GM12878 (cell line): ENCODE measurements at regions of chr3 and their contacts with region 1.

Region 1: GRCh38 chr3:107574650-107575049 is 51.9 kb downstream of the BBX start:
- DNase-seq: no peak
- ATAC-seq: peak; percentile 89
- H3K4me3 ChIP-seq: no peak overlapping the region
- H3K27ac ChIP-seq: no peak overlapping the region
- H3K4me1 ChIP-seq: no peaks in the 10 kb centered on the region
- H3K27me3 ChIP-seq: no peaks in the 10 kb centered on the region
- CTCF ChIP-seq: peak; percentile 45 to 70 (median 47); a peak in 5 of 6 replicates
- EP300 ChIP-seq: no peak
- POLR2A ChIP-seq: no peak
- RAD21 ChIP-seq: peak; percentile 85

Region 2: DNA sequence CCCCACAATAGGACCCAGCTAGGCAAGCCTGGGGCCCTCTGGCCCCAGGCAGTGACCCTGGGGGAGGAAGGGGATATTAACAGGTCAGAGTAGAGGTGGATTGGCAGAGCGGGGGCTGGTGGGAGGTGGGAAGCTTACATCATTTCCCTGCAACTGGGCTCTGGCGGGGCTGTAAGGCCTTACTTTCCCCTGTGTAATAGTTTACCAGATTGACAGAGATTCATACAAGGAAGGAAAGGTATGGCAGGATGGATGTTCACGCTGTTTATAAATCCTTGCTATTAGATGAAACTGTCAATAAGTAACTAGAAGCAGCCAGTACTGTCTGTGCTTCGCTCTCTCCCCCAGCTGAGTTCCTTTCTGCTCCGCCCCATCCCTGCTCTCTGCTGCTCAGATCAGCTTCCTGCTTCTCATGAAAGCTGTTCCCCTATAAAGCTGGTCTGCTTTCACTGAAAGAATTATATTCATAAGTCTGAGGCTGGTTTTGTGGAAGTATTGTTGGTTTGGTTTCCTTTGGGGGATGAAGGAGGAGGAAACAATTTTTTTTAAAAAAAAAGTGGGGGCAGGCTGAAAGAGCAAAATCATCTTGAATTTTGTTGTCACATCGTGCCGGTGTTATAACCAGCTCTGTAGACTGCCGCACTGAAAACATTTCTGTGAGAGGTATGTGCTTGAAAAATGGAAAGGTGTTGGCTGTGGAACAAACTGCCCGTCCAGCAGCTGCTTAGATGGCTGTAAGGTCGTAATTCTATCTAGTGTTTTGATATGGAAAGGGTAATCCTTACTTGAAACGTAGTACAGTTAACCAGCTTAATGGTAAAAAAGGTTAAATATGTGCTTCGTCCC is 24.5 kb after region 1 on chr3:
- CTCF ChIA-PET with region 1: interaction called, 38 read pairs
- POLR2A ChIA-PET with region 1: interaction called, 3 read pairs
- RAD21 ChIA-PET with region 1: interaction called, 19 read pairs
- SMC1A ChIA-PET with region 1: interaction called, 48 read pairs
- in situ Hi-C with region 1: no loop called
- intact Hi-C with region 1: no loop called
- DNase-seq: peak; percentile 59
- ATAC-seq: peak; percentile 92
- H3K4me3 ChIP-seq: peak overlapping the region; percentile 71
- H3K27ac ChIP-seq: peak overlapping the region; percentile 82
- H3K4me1 ChIP-seq: peaks cover 13% of the 10 kb centered on the region
- H3K27me3 ChIP-seq: no peaks in the 10 kb centered on the region
- CTCF ChIP-seq: no peak
- EP300 ChIP-seq: no peak
- POLR2A ChIP-seq: peak; percentile 58; the same call in 1 of the 2 replicates
- RAD21 ChIP-seq: no peak

Region 3: DNA sequence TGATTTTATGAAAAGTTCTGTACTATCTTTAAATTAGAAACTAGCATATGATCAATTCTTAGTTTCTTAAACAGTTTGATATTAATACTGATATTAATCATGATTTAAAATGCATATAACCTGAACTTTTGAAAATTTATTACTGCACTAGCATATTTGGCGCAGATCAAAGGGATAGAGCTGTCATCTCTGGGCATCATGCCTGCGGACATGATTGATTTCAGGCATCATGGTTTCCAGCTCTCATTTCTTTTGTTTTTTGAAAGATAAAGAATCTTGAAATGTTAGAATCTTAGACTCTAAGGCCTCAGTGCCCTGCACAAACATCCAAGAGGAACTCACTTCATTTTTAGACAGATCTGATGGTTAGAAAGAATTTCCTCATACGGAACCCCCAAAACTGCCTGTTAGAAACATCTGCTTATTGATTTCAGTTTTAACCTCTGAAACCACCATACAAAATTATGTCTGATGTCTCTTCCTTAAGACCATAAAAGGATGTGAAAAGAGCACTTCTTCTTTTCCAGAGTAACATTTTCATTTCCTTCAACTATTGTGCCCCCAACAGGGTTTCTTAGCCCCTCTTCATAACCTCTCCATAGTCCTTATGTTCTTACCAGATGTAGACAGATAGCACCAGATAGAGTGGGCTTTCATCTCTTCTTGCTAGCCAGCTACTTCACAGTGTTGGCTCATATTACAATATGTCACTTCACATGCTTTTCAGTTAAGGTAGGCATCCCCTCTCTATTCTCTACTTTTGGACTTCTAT is 58.9 kb after region 1 on chr3:
- CTCF ChIA-PET with region 1: interaction called, 15 read pairs
- POLR2A ChIA-PET with region 1: no interaction called
- RAD21 ChIA-PET with region 1: interaction called, 7 read pairs
- SMC1A ChIA-PET with region 1: interaction called, 19 read pairs
- in situ Hi-C with region 1: no loop called
- intact Hi-C with region 1: no loop called
- DNase-seq: peak; percentile 56
- ATAC-seq: peak; percentile 94
- H3K4me3 ChIP-seq: peak overlapping the region; percentile 40; the same call in 1 of the 2 replicates
- H3K27ac ChIP-seq: peak overlapping the region; percentile 63
- H3K4me1 ChIP-seq: peaks cover 20% of the 10 kb centered on the region
- H3K27me3 ChIP-seq: no peaks in the 10 kb centered on the region
- CTCF ChIP-seq: no peak
- EP300 ChIP-seq: peak; percentile 63 to 77
- POLR2A ChIP-seq: no peak
- RAD21 ChIP-seq: no peak

Region 4: DNA sequence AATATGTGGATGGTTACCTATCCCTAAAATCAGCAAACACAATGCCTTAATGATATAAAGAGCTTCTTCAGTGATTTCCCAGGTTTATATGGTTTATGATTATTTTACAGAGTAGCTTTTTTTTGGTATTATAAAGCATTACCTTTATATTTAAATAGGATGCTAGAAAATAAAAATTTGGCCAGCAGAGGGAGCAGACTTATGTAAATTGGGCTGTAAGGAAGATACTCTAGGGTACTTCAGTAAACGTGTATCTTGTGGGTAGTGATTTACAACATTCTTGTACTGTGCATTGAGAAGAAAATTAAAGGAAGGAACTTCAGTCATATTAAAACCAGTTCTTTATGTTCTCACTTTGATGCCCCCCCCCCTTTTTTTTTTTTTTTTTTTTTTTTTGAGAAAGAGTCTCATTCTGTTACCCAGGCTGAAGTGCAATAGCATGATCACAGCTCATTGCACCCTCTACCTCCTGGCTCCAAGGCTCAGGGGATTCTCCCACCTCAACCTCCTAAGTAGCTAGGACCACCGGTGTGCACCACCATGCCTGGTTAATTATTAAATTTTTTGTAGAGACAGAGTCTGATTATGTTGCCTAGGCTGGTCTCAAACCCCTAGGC is 116.0 kb after region 1 on chr3:
- CTCF ChIA-PET with region 1: interaction called, 10 read pairs
- POLR2A ChIA-PET with region 1: no interaction called
- RAD21 ChIA-PET with region 1: no interaction called
- SMC1A ChIA-PET with region 1: interaction called, 4 read pairs
- in situ Hi-C with region 1: no loop called
- intact Hi-C with region 1: no loop called
- DNase-seq: no peak
- ATAC-seq: peak; percentile 90
- H3K4me3 ChIP-seq: no peak overlapping the region
- H3K27ac ChIP-seq: no peak overlapping the region
- H3K4me1 ChIP-seq: no peaks in the 10 kb centered on the region
- H3K27me3 ChIP-seq: no peaks in the 10 kb centered on the region
- CTCF ChIP-seq: peak; percentile 32 to 50 (median 39); a peak in 4 of 6 replicates
- EP300 ChIP-seq: no peak
- POLR2A ChIP-seq: no peak
- RAD21 ChIP-seq: peak; percentile 33; the same call in 1 of the 2 replicates

Region 5: GRCh38 chr3:107846279-107846852 is 271.7 kb after region 1 on chr3:
- CTCF ChIA-PET with region 1: interaction called, 9 read pairs
- POLR2A ChIA-PET with region 1: no interaction called
- RAD21 ChIA-PET with region 1: interaction called, 6 read pairs
- SMC1A ChIA-PET with region 1: interaction called, 5 read pairs
- in situ Hi-C with region 1: no loop called
- intact Hi-C with region 1: loop called (anchors 10 kb)
- DNase-seq: no peak
- ATAC-seq: peak; percentile 64
- H3K4me3 ChIP-seq: no peak overlapping the region
- H3K27ac ChIP-seq: no peak overlapping the region
- H3K4me1 ChIP-seq: no peaks in the 10 kb centered on the region; the same call in 1 of the 2 replicates
- H3K27me3 ChIP-seq: no peaks in the 10 kb centered on the region; a peak in 1 of 4 replicates
- CTCF ChIP-seq: peak; percentile 56 to 61 (median 58)
- EP300 ChIP-seq: no peak
- POLR2A ChIP-seq: no peak
- RAD21 ChIP-seq: peak; percentile 54